A549 (cell line): ENCODE measurements at regions of chr17 and their contacts with region 1.

Region 1: DNA sequence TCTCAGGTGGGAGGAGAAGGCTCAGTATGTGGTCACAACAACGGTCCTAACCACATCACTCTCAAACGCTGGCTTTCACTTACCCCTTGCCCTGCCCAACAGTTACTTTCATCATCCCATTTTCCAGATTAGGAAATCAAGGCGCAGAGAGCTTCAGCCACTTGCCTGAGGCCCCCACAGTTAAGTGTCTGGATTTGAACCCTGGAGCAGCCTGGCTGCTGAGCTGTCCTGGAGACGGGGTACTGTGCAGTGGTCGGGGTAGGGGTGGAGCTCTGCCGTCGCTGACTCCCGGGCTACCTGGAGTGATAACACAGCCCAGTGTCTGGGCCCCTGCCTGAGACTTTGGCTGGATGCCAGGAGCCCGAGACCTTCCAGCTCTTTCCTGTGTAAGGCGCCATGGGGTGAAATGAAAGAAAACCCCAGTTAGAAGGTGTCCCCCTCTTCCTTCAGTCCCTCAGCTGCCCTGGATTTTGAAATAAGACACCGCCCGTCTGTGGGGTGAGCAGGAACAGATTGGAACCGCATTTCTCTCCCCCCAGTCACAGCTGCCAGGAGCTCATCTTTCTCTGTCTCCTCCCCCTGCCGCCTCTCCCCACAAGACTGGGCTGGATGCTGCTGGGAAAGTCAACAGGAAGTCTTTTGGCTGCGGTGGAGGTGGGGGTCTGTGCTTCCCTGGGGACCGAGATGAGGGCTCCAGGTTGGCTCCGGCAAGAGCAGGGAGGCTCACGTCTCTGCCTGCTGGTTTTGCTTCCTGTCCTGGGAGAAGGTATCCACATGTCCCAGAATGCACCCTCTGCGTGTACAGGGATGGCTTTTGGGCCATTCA is 280.2 kb downstream of the SEC14L1 start:
- DNase-seq: peak; percentile 54 to 70
- ATAC-seq: peak in 1 of 2 experiments; percentile 9; a peak in 3 of 6 replicates
- H3K4me3 ChIP-seq: no peak overlapping the region
- H3K27ac ChIP-seq: peak overlapping the region; percentile 75 to 95
- H3K4me1 ChIP-seq: peaks cover 81% of the 10 kb centered on the region
- CTCF ChIP-seq: no peak
- EP300 ChIP-seq: no peak
- POLR2A ChIP-seq: no peak
- RAD21 ChIP-seq: no peak

Region 2: GRCh38 chr17:77400445-77400870 is 20.6 kb before region 1 on chr17:
- CTCF ChIA-PET with region 1: interaction called, 20 read pairs
- POLR2A ChIA-PET with region 1: no interaction called
- DNase-seq: no peak
- ATAC-seq: peak; percentile 62 to 76; a peak in 5 of 6 replicates
- H3K4me3 ChIP-seq: no peak overlapping the region
- H3K27ac ChIP-seq: peak overlapping the region in 1 of 2 experiments; percentile 33; a peak in 3 of 6 replicates
- H3K4me1 ChIP-seq: peaks cover 14% of the 10 kb centered on the region; the same call in 1 of the 3 replicates
- CTCF ChIP-seq: peak; percentile 18; the same call in 2 of the 3 replicates
- EP300 ChIP-seq: no peak
- POLR2A ChIP-seq: no peak
- RAD21 ChIP-seq: peak; percentile 43 to 58; a peak in 3 of 5 replicates

Region 3: DNA sequence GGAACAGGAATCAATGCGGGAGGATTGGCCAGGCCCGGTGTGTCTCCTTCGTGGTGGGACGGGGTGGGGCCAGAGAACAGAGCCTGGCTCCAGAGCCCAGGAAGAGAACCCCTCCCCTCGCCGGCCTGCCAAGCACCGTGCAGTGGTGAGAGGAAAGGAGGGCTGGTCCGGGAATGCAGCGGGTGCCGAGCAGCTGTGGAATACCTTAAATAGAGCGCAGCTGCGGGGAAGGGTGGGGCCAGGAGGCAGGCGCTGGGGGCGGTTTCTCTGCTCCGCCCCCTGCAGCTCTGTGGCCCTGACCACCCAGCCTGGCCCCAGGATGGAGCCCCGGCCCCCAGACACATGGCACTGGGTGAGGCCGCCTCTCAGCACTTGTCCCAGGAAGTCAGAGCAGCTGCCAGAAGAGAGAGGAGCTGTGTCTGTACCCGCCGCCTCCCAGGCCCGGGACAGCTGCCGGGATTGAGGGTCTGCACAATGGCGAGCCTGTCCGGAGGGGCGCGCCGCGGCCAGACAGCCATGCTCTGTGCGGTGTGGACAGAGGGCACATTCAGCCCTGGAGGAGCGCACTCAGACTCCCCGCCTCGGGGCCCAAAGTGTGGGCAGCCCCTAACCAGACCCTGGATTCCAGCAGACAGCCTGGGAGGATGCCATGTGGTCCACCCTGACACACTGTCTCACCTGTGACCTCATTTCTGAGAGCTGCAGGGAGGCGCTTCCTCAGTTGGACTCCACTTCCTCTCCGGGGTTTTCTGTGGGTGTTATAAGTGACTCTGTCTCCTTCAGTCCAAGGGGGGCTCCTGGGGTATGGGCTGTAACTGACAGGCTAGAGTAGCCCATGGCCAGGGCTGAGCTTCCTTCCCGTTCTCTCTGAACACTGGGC is 11.5 kb before region 1 on chr17:
- CTCF ChIA-PET with region 1: interaction called, 20 read pairs
- POLR2A ChIA-PET with region 1: interaction called, 4 read pairs
- DNase-seq: no peak
- ATAC-seq: peak; percentile 8 to 17; a peak in 4 of 6 replicates
- H3K4me3 ChIP-seq: no peak overlapping the region
- H3K27ac ChIP-seq: peak overlapping the region; percentile 53 to 70; a peak in 4 of 6 replicates
- H3K4me1 ChIP-seq: peaks cover 76% of the 10 kb centered on the region
- CTCF ChIP-seq: no peak
- EP300 ChIP-seq: no peak
- POLR2A ChIP-seq: no peak
- RAD21 ChIP-seq: no peak

Region 4: GRCh38 chr17:77516902-77517301 is 95.9 kb after region 1 on chr17:
- CTCF ChIA-PET with region 1: no interaction called
- POLR2A ChIA-PET with region 1: no interaction called
- DNase-seq: peak in 1 of 2 experiments; percentile 35
- ATAC-seq: peak; percentile 59 to 67; a peak in 5 of 6 replicates
- H3K4me3 ChIP-seq: no peak overlapping the region
- H3K27ac ChIP-seq: no peak overlapping the region
- H3K4me1 ChIP-seq: no peaks in the 10 kb centered on the region
- CTCF ChIP-seq: no peak
- EP300 ChIP-seq: no peak
- POLR2A ChIP-seq: no peak
- RAD21 ChIP-seq: no peak

Region 5: DNA sequence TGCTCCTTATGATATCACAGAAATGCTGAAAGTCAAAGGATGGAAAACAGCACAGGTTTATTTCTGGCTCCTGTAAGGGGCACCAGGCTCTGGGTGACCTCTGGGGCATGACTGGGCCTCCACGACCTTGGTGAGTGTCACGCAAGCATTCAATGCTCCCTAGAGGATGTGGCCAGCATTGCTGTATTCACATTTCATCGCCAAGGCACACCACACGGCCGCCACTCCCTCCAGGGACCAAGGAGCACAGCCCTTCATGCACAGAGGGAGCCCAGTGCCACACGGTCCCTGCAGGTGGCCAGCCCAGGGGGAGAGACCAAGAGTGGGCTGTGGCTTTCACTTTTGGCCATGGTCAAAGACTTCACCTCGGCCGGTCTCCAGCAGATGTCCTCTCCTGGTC is 400.1 kb after region 1 on chr17:
- CTCF ChIA-PET with region 1: no interaction called
- POLR2A ChIA-PET with region 1: no interaction called
- DNase-seq: peak in 1 of 2 experiments; percentile 34
- ATAC-seq: peak; percentile 79 to 80
- H3K4me3 ChIP-seq: no peak overlapping the region
- H3K27ac ChIP-seq: no peak overlapping the region
- H3K4me1 ChIP-seq: no peaks in the 10 kb centered on the region
- CTCF ChIP-seq: no peak
- EP300 ChIP-seq: no peak
- POLR2A ChIP-seq: no peak
- RAD21 ChIP-seq: peak; percentile 27 to 34; a peak in 1 of 5 replicates